ENCODE measurements at regions of chr17 and their contacts with region 1.

Region 1: GRCh38 chr17:68398691-68399637 is 58.3 kb downstream of the WIPI1 start:
- DNase-seq: peak; percentile 46
- H3K4me3 Mint-ChIP-seq: peak overlapping the region; percentile 8
- H3K27ac Mint-ChIP-seq: peak overlapping the region; percentile 69
- H3K4me1 Mint-ChIP-seq: peaks cover 47% of the 10 kb centered on the region
- H3K27me3 Mint-ChIP-seq: no peaks in the 10 kb centered on the region

Region 2: GRCh38 chr17:68291844-68292695 is 106.9 kb before region 1 on chr17:
- CTCF ChIA-PET with region 1: interaction called, 14 read pairs
- DNase-seq: peak; percentile 96
- H3K4me3 Mint-ChIP-seq: peak overlapping the region; percentile 67
- H3K27ac Mint-ChIP-seq: peak overlapping the region; percentile 96
- H3K4me1 Mint-ChIP-seq: peaks cover 70% of the 10 kb centered on the region
- H3K27me3 Mint-ChIP-seq: peaks cover 24% of the 10 kb centered on the region

Region 3: GRCh38 chr17:68327823-68328570 is 71.0 kb before region 1 on chr17:
- CTCF ChIA-PET with region 1: interaction called, 13 read pairs
- DNase-seq: no peak
- H3K4me3 Mint-ChIP-seq: no peak overlapping the region
- H3K27ac Mint-ChIP-seq: no peak overlapping the region
- H3K4me1 Mint-ChIP-seq: peaks cover 20% of the 10 kb centered on the region
- H3K27me3 Mint-ChIP-seq: peaks cover 20% of the 10 kb centered on the region

Region 4: GRCh38 chr17:68383443-68384321 is 15.3 kb before region 1 on chr17:
- CTCF ChIA-PET with region 1: interaction called, 13 read pairs
- DNase-seq: peak; percentile 63
- H3K4me3 Mint-ChIP-seq: peak overlapping the region; percentile 17
- H3K27ac Mint-ChIP-seq: peak overlapping the region; percentile 46
- H3K4me1 Mint-ChIP-seq: peaks cover 34% of the 10 kb centered on the region
- H3K27me3 Mint-ChIP-seq: peaks cover 4% of the 10 kb centered on the region